Colonic mucosa (tissue), 4 donors: ENCODE measurements at regions of chr17 and their contacts with region 1.

Region 1: GRCh38 chr17:75109407-75110233 is at the start of gene ARMC7:
- DNase-seq: peak; percentile 96
- H3K4me3 ChIP-seq: peak within 1 kb of the TSS; percentile 85
- H3K27ac ChIP-seq: peak within 1 kb of the TSS; percentile 83
- H3K4me1 ChIP-seq: peaks cover 9% of the 10 kb centered on the region
- H3K27me3 ChIP-seq: no peaks in the 10 kb centered on the region
- CTCF ChIP-seq: no peak
- total RNA-seq, gene ARMC7: 20.5 to 20.7 TPM

Region 2: DNA sequence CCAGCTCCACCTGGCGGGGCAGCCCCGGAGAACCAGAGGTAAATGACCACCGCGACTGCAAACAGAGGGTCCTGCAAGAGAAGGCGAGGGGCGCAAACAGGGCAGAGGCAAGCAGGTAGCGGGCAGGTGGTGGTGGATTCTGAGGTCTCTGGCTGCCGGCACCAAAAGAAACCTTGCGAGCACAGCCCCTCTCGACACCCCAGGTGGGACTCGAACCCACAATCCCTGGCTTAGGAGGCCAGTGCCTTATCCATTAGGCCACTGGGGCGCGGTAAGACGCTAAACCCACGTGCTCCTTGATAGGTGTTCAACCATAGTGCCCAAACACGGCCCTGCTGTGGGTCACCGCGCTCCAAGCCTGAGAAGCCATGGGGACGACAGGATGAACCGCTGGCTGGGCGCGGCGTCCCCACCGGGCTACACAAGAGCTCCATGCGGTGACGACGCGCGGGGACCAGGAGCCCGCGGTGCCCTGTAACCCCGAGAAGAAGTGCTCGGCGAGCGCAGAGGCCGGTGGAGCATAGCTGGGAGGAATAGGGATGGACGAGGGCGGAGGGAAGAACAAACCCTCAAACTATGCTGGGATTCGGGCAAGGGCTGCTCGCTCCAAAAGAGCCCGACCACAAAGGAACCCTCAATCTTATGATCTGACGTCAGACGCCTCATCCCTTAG is 75.2 kb before region 1 on chr17:
- intact Hi-C with region 1: no loop called
- DNase-seq: peak; percentile 94
- H3K4me3 ChIP-seq: peak overlapping the region; percentile 58
- H3K27ac ChIP-seq: peak overlapping the region; percentile 72
- H3K4me1 ChIP-seq: peaks cover 3% of the 10 kb centered on the region
- H3K27me3 ChIP-seq: no peaks in the 10 kb centered on the region
- CTCF ChIP-seq: no peak

Region 3: DNA sequence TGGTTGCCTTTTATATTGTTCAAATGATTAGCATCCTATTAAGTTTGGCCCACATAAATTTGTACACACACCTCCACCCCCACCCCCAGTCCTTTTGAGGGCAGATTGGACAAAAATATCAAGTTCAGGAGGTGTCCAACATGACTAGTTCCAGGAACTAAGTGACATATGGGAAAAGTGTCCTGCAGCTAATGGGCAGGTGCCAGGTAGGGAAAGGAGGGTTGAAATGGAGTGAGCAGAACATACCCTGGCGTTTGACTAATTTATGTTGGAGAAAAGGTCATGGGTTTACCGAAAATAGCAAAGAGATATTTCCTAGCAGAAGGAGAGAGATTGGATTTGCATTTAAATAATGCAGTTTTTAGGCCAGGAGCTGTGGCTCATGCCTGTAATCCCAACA is 57.7 kb before region 1 on chr17:
- intact Hi-C with region 1: no loop called
- DNase-seq: no peak
- H3K4me3 ChIP-seq: no peak overlapping the region
- H3K27ac ChIP-seq: no peak overlapping the region
- H3K4me1 ChIP-seq: no peaks in the 10 kb centered on the region
- H3K27me3 ChIP-seq: no peaks in the 10 kb centered on the region
- CTCF ChIP-seq: no peak

Region 4: DNA sequence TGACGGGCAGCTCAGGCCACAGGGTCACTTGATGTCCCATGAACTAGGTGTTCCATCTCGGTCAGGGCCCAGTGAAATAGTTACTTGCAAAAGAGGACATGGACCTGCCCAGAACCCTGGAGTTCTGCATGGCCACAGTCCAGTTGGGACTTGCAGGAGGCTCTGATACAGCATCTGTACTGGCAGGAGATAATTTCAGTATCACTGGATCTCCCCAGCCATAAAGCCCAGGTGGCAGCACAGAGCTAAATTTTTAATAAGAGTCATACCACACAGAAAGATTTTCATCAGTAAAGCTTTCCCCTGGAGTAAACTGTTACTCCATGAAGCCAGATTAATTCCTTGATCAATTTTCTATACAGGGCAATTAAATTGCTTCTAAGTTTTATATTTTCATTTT is 39.8 kb before region 1 on chr17:
- intact Hi-C with region 1: loop called (anchors 5 kb)
- DNase-seq: no peak
- H3K4me3 ChIP-seq: no peak overlapping the region
- H3K27ac ChIP-seq: no peak overlapping the region
- H3K4me1 ChIP-seq: peaks cover 7% of the 10 kb centered on the region
- H3K27me3 ChIP-seq: no peaks in the 10 kb centered on the region
- CTCF ChIP-seq: peak; percentile 12

Region 5: GRCh38 chr17:75131280-75132017 is 21.8 kb after region 1 on chr17 and contains the start of gene NT5C:
- intact Hi-C with region 1: loop called (anchors 1 kb)
- DNase-seq: peak; percentile 90
- H3K4me3 ChIP-seq: peak within 1 kb of the TSS; percentile 83
- H3K27ac ChIP-seq: peak within 1 kb of the TSS; percentile 94
- H3K4me1 ChIP-seq: peaks cover 12% of the 10 kb centered on the region
- H3K27me3 ChIP-seq: no peaks in the 10 kb centered on the region
- CTCF ChIP-seq: peak; percentile 74
- total RNA-seq, gene NT5C: 72.3 to 94.9 TPM

Region 6: DNA sequence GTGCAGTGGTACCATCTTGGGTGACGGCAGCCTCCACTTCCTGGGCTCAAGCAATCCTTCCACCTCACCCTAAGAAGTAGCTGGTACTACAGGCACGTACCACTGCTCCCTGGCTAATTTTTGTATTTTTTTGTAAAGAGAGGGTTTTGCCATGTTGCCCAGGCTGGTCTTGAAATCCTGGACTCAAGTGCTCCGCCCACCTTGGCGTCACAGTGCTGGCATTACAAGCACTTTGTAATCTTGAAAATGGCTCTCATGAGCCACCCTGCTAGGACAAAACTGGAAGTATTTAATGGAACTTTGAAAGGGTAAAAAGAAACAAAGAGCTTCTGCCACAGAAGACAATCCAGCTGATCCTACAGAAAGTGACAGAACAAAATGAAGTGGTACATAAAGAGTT is 63.9 kb after region 1 on chr17:
- intact Hi-C with region 1: loop called (anchors 5 kb)
- DNase-seq: no peak
- H3K4me3 ChIP-seq: no peak overlapping the region
- H3K27ac ChIP-seq: no peak overlapping the region
- H3K4me1 ChIP-seq: no peaks in the 10 kb centered on the region
- H3K27me3 ChIP-seq: no peaks in the 10 kb centered on the region
- CTCF ChIP-seq: no peak

Region 7: GRCh38 chr17:75199886-75200618 is 90.4 kb after region 1 on chr17:
- intact Hi-C with region 1: loop called (anchors 5 kb)
- DNase-seq: no peak
- H3K4me3 ChIP-seq: no peak overlapping the region
- H3K27ac ChIP-seq: no peak overlapping the region
- H3K4me1 ChIP-seq: no peaks in the 10 kb centered on the region
- H3K27me3 ChIP-seq: no peaks in the 10 kb centered on the region
- CTCF ChIP-seq: no peak